ENCODE measurements at regions of chr3 and their contacts with region 1.

Region 1: DNA sequence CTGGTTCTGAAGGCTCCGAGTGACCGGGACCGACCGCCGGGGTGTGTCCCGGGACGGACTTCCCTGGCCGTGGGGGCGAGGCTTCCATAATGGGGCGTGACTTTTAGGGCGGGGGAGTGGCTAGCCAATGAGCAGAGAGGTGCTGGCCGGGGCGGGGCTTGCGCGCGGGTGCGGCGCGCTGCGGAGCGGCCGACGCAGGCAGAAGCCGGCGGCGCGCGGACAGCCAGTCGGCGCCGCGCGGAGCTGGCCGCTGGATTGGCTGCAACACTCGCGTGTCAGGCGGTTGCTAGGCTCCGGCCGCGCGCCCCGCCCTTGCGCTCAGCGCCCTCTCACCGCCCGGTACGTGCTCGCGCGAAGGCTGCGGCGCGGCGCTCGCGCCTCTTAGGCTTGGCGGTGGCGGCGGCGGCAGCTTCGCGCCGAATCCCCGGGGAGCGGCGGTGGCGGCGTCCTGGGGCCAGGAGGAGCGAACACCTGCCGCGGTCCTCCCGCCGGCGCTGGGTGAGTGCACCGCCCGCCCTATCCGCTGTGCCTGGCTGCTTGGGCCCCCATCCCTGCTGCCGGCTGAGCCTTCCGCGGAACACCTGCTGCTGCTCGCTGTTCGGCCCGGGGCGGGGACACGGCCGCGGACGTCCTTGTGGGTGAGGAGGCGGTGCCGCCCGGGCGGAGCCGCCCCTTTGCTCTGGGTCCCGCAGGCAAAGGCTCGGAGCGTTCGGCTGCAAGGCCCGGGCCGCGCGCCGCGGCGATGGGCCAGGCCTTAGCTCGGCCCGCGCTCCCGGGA is at the start of gene DAG1:
- DNase-seq: peak; percentile 94 to 99
- H3K4me3 ChIP-seq: peak within 1 kb of the TSS; percentile 86 to 99
- H3K27ac ChIP-seq: peak within 1 kb of the TSS; percentile 98 to 99
- H3K4me1 ChIP-seq: peaks cover 18 to 23% of the 10 kb centered on the region in 2 donors
- H3K27me3 ChIP-seq: no peaks in the 10 kb centered on the region
- CTCF ChIP-seq: no peak
- total RNA-seq, gene DAG1: 57.9 TPM

Region 2: DNA sequence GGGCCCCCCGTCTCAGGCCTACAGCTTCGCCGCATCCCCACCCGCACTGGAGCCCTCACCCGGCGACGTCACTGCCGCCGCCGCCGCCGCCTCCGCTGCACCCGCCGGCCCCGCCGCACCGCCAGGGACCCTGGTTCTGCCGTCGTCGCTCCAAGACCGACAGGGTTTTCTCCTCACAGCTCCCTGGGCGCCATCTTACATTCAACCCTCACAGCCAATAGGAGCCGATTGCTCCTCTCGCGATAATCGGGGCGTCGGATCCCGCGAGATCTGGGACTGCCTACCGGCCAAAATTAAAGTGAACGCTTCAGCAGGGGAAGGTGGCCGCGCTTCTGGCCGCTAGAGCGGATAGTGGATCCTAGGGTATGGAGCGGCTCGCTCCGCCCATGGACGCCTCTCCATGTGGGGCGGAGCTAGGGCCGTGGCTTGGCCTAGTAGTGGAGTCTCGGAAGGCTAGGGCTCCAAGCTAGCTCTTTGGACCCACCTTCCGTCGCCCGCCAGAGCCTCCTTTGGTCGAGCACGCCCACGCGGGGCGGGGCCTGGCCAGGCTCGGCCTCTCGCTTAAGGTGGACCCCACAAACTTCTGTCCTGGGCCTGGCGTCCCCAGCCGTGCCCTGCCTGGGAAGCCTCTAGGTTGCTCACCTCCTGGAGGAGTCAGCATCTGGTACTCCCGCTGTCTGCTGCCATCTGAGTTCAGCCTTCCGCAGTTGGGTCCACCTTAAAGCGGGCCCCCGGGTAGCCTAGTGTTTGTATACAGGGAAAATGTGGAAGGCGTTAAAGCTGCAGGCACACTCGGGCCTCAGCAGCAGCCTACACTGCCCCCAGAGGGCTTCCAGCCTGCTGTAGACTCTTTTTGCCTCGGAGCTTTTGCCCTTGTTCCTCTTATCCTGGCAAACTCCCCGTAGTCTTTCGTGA is 376.0 kb before region 1 on chr3 and contains the start of gene QRICH1:
- intact Hi-C with region 1: loop called (anchors 10 kb)
- DNase-seq: peak; percentile 94 to 99
- H3K4me3 ChIP-seq: peak within 1 kb of the TSS; percentile 97 to 98
- H3K27ac ChIP-seq: peak within 1 kb of the TSS; percentile 94 to 97
- H3K4me1 ChIP-seq: peaks cover 0 to 26% of the 10 kb centered on the region in 2 donors
- H3K27me3 ChIP-seq: no peaks in the 10 kb centered on the region
- CTCF ChIP-seq: peak; percentile 50 to 62 (median 60)
- total RNA-seq, gene QRICH1: 129 TPM

Region 3: GRCh38 chr3:49171119-49171774 is 298.9 kb before region 1 on chr3 and contains the start of gene KLHDC8B:
- intact Hi-C with region 1: loop called (anchors 1 kb)
- DNase-seq: peak; percentile 55 to 91
- H3K4me3 ChIP-seq: peak within 1 kb of the TSS; percentile 70 to 75
- H3K27ac ChIP-seq: peak within 1 kb of the TSS; percentile 82 to 92
- H3K4me1 ChIP-seq: peaks cover 18 to 37% of the 10 kb centered on the region in 2 donors
- H3K27me3 ChIP-seq: no peaks in the 10 kb centered on the region
- CTCF ChIP-seq: peak; percentile 93 to 98 (median 96)
- total RNA-seq, gene KLHDC8B: 57.5 TPM

Region 4: DNA sequence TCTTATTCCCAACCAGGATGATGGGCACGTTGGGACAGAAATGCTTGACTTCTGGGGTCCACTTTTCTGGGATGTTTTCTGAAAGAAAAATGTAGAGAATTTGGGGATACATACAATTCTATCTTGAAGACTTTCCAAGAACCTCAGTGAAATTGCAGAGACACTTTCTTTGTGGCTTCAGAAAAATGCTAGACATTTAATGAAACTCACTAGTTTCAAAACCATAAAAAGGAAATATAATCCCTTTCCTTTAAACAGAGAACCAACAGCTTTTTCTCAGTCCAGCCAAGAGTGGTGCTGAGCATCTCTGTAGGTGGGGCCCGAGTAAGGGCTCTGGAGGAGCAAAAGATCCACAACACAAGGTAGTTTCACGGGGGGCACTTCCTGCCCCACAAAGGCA is 107.6 kb before region 1 on chr3:
- intact Hi-C with region 1: no loop called
- DNase-seq: no peak
- H3K4me3 ChIP-seq: no peak overlapping the region
- H3K27ac ChIP-seq: peak overlapping the region in 1 of 2 donors; percentile 18
- H3K4me1 ChIP-seq: peaks cover 0 to 8% of the 10 kb centered on the region in 2 donors
- H3K27me3 ChIP-seq: no peaks in the 10 kb centered on the region
- CTCF ChIP-seq: no peak

Region 5: DNA sequence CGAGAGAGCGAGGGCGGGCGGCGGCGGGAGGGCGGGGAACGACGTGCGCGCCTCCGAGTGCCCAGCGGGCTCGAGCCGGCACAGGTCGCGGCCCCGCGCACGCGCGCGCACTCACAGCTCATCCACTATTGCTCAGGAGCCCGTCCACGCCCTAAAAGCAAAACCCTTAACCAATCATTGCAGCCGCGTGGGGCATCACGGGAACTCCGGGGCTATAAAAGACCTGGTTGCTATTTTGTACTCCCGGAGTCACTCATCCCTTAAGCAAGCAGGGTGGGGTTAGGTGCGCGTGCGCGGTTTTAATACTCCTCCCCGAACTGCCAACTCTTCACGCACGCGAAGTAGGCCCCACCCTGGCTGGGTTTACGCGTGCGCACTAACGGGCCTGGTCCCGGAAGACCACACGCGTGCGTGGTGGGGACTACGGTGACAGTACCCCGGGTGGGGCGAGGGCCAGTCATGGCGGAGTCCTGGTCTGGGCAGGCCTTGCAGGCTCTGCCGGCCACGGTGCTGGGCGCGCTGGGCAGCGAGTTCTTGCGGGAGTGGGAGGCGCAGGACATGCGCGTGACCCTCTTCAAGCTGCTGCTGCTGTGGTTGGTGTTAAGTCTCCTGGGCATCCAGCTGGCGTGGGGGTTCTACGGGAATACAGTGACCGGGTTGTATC is 58.0 kb before region 1 on chr3 and contains the starts of genes RHOA and TCTA:
- intact Hi-C with region 1: loop called (anchors 1 kb)
- DNase-seq: peak; percentile 100
- H3K4me3 ChIP-seq: peak within 1 kb of the TSS; percentile 80 to 97
- H3K27ac ChIP-seq: peak within 1 kb of the TSS; percentile 97 to 99
- H3K4me1 ChIP-seq: peaks cover 0 to 40% of the 10 kb centered on the region in 2 donors
- H3K27me3 ChIP-seq: no peaks in the 10 kb centered on the region
- CTCF ChIP-seq: no peak
- total RNA-seq, gene RHOA: 426 TPM
- total RNA-seq, gene TCTA: 51.5 TPM

Region 6: GRCh38 chr3:49428697-49429100 is 41.4 kb before region 1 on chr3:
- intact Hi-C with region 1: loop called (anchors 1 kb)
- DNase-seq: no peak
- H3K4me3 ChIP-seq: peak overlapping the region; percentile 83 to 92
- H3K27ac ChIP-seq: peak overlapping the region; percentile 91 to 93
- H3K4me1 ChIP-seq: peaks cover 0 to 7% of the 10 kb centered on the region in 2 donors
- H3K27me3 ChIP-seq: no peaks in the 10 kb centered on the region
- CTCF ChIP-seq: no peak

Region 7: DNA sequence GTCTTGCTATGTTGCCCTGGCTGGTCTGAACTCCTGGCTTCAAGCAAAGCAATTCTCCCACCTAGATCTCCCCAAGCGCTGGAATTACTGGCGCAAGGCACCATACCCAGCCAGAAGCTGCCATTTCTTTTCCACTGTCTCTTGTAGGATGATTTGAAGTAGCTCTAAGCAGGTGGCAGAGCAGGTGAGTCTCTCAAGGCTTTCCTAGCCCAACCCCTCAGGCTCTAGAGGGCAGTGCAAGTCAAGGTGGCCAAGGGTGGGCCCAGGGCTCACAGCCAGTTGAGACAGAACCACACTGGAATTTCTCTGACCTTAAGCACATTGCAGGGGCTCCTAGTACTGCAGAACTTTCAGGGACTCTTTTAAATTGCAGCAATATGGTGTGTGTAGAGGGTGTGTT is 15.7 kb before region 1 on chr3:
- intact Hi-C with region 1: no loop called
- DNase-seq: no peak
- H3K4me3 ChIP-seq: no peak overlapping the region
- H3K27ac ChIP-seq: peak overlapping the region; percentile 12 to 54
- H3K4me1 ChIP-seq: peaks cover 0 to 3% of the 10 kb centered on the region in 2 donors
- H3K27me3 ChIP-seq: no peaks in the 10 kb centered on the region
- CTCF ChIP-seq: peak in 1 of 3 experiments; percentile 39

Region 8: DNA sequence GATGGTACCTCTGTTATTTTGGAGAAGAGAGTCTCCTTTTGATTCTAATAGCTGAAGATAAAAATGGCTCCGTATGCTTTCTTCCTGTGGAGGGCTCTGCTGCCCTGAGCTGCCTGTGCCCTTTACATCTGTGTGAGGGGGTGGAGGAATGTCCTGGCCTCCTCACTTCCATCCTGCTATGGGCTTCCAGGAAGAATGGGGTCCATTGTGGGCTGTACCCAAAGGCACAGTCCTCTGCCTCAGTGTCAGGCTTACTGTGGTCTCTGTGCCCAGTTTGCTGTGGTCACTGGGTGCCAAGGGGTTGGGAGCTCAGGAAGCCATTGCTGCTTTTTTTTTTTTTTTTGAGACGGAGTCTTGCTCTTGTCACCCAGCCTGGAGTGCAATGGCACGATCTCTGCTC is 14.3 kb after region 1 on chr3:
- intact Hi-C with region 1: loop called (anchors 1 kb)
- DNase-seq: no peak
- H3K4me3 ChIP-seq: no peak overlapping the region
- H3K27ac ChIP-seq: peak overlapping the region; percentile 46 to 51
- H3K4me1 ChIP-seq: peaks cover 8 to 14% of the 10 kb centered on the region in 2 donors
- H3K27me3 ChIP-seq: no peaks in the 10 kb centered on the region
- CTCF ChIP-seq: no peak

Region 9: DNA sequence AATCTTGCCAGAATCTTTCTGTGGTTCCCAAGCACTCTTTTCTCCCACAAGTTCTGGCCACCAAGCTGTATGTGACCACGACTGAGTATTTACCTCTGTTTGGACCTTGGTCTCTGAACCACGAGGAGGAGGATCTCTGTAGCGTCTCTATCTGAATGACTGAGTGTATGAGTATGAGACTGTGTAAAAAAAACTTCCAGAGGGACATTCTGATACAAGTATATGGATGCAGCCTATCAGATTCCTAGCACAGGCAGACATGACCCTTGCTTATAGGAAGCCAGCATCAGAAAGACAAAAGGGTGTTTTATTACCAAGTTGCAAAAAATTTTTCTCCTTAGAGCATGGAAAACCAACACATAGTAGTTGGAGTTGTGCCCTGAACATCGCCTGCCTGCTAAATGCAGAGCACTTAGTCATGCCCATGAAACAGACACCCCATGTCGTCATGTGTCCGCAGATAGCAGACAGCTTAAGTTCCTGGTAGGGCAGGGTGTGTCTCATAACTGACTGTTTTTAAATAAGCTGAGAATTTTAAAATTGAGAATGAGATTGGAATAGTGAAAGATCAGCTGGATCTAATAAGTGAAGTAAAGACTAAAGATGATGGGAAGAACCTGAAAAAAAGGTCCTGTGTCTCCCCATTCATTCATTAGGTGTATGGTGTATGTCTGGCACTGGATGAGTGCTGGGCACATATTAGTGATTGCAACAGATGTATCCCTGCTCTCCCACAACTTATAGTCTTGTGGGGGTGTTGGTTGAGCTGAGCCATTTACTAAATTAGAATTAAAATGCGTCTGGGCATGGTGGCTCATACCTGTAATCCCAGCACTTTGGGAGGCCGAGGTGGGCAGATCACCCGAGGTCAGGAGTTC is 30.8 kb after region 1 on chr3:
- intact Hi-C with region 1: loop called (anchors 1 kb)
- DNase-seq: peak; percentile 63 to 94
- H3K4me3 ChIP-seq: peak overlapping the region in 1 of 2 donors; percentile 22
- H3K27ac ChIP-seq: peak overlapping the region; percentile 92 to 93
- H3K4me1 ChIP-seq: peaks cover 6 to 26% of the 10 kb centered on the region in 2 donors
- H3K27me3 ChIP-seq: no peaks in the 10 kb centered on the region
- CTCF ChIP-seq: no peak

Region 10: DNA sequence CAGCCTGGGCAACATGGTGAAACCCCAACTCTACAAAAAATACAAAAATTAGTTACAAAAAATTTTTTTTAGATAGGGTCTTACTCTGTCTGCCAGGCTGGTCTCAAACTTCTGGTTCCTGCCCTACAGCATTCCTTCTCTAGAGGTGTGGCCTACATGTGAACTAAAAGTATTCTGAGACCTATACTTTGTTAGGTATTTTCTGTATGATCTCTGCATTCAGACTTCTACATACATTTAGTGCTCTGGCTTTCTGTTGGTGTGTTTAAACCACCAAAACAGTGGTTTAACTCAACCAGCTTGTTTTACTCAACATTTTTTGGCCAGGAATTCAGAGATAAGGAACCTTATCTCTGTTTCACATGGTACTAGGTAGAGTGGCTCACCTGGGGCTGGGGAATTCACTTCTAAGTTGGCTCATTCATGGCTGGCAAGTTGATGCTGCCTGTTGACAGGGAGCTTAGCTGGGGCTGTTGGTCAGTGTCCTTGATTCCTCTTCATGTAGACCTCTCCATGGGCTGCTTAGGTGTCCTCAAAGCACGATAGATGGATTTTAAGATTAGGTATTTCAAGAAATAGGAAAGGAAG is 42.7 kb after region 1 on chr3:
- intact Hi-C with region 1: no loop called
- DNase-seq: no peak
- H3K4me3 ChIP-seq: no peak overlapping the region
- H3K27ac ChIP-seq: no peak overlapping the region
- H3K4me1 ChIP-seq: no peaks in the 10 kb centered on the region
- H3K27me3 ChIP-seq: no peaks in the 10 kb centered on the region
- CTCF ChIP-seq: no peak

Region 11: GRCh38 chr3:50211930-50212329 is 741.8 kb after region 1 on chr3:
- intact Hi-C with region 1: no loop called
- DNase-seq: no peak
- H3K4me3 ChIP-seq: no peak overlapping the region
- H3K27ac ChIP-seq: no peak overlapping the region
- H3K4me1 ChIP-seq: no peaks in the 10 kb centered on the region
- H3K27me3 ChIP-seq: no peaks in the 10 kb centered on the region
- CTCF ChIP-seq: no peak

Measured in ascending aorta (tissue), 2 donors.